ENCODE measurements at regions of chr1 and their contacts with region 1.

Region 1: DNA sequence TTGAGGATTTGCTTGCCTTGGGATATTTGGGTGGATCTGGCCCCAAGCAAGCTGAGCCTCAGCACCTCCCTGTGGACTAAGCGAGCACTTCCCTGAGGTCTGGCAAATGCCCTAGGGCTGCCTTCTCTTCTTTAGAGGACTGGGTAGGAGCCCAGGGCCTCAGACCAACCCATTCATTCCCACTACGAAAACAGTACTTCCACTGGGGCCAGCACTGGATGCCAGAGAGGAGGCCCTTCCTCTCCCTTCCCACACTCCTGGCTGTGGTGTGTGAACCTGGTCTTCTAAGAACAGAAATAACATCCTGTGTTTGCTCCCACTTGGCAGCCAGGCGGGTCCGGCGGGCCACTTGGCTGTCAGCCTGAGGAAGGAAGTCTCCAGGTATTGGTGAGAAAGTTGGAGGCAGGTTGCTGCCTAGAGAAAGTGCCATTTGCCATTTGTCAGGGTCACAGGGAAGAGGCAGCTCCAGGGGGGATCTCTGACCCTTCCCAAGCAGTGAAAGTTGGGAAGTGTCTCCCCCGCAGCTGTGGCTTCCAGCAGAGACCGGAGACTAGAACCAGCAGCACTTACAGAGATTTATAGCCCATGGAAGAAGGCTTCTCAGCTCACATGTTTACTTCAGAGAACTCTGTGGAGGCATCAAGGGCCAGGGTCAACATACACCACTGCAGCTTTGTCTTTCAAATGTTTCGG is 323.5 kb downstream of the SIPA1L2 start:
- DNase-seq: peak; percentile 84

Region 2: GRCh38 chr1:232192829-232193783 is 113.3 kb before region 1 on chr1:
- intact Hi-C with region 1: no loop called
- DNase-seq: no peak

Region 3: DNA sequence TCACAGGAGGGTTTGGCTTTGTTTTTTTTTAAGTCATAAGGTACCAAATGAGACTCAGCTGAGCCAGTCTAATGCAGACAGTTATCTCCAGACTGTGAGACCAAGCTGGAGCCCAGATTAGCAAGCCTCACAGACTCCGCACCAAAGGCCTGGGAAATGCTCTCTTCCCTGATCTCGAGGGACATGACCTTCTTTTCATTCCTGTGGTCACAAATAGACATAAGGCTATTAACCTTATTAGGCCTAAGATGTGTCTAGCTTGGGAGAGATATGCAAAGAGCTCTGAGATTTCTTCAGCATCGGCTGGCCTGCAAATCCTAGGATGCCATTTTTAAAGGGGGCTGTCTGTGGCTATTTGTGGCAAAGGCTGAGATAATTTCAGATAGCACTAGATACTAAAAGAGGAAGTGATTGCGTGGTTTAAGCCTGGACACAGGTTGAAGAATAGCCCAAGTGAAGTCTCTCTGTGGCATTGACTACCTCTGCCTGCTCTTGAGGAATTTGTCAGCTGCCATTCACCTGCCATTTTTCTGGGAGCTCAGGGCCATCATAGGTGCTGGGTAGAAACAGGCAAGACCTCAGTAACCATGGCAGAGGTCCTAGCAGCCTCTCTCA is 22.2 kb after region 1 on chr1:
- intact Hi-C with region 1: no loop called
- DNase-seq: no peak

Region 4: GRCh38 chr1:232369451-232370296 is 63.3 kb after region 1 on chr1:
- intact Hi-C with region 1: loop called (anchors 5 kb)
- DNase-seq: no peak

Measured in cardiac septum (tissue), 1 donor.